Panc1 (cell line): ENCODE measurements at regions of chr1 and their contacts with region 1.

Region 1: DNA sequence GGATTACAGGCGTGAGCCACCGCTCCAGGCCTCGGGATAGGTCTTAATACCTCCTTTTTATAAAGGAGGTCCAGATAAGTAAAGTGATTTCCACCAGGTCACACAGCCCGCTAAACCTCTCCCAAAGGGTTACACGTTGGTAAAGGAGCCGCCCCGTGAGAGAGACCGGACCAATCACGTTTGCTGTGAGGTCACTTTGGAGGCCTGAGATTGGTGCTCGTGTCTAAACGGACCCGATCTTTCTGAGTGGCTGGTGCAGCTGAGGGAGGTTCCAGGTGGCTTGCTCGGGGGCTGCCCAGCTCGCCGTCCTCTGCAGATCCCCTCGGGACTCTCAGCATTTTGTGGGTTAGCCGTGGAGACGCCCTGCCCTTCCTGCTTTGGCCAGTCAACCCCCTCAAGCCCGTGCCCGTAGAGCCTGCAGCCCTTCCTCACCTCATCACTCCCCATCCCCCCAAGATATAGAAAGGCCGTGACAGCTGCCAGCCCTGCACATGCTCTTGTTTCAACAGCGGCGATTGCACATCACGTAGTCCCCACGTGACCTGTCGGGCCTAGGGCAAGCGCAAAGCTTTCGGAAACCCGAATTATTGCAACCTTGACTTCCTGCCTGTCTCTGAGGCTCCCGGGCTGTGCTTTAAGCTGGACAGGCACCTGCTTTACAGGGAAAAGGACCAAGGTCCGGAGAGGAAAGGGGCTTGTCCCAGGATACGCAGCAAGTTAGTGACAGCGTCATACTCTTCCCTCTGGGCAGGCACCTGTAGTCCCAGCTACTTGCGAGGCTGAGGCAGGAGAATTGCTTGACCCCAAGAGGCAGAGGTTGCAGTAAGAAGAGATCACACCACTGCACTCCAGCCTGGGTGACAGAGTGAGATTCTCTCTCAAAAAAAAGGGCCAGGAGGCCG is 5.0 kb upstream of the COA7 start:
- DNase-seq: peak; percentile 89
- ATAC-seq: peak; percentile 95
- H3K4me3 ChIP-seq: peak overlapping the region; percentile 53 to 82
- H3K27ac ChIP-seq: peak overlapping the region; percentile 82
- H3K4me1 ChIP-seq: peaks cover 25% of the 10 kb centered on the region
- H3K27me3 ChIP-seq: no peaks in the 10 kb centered on the region
- CTCF ChIP-seq: no peak

Region 2: GRCh38 chr1:52552505-52553361 is 150.4 kb before region 1 on chr1 and contains the start of gene TUT4:
- CTCF ChIA-PET with region 1: interaction called, 10 read pairs
- POLR2A ChIA-PET with region 1: no interaction called
- in situ Hi-C with region 1: no loop called
- intact Hi-C with region 1: no loop called
- DNase-seq: no peak
- ATAC-seq: peak; percentile 81
- H3K4me3 ChIP-seq: peak within 1 kb of the TSS; percentile 81 to 96
- H3K27ac ChIP-seq: peak within 1 kb of the TSS; percentile 93
- H3K4me1 ChIP-seq: peaks cover 26% of the 10 kb centered on the region
- H3K27me3 ChIP-seq: no peaks in the 10 kb centered on the region
- CTCF ChIP-seq: no peak
- total RNA-seq, gene TUT4: 67.4 TPM

Region 3: DNA sequence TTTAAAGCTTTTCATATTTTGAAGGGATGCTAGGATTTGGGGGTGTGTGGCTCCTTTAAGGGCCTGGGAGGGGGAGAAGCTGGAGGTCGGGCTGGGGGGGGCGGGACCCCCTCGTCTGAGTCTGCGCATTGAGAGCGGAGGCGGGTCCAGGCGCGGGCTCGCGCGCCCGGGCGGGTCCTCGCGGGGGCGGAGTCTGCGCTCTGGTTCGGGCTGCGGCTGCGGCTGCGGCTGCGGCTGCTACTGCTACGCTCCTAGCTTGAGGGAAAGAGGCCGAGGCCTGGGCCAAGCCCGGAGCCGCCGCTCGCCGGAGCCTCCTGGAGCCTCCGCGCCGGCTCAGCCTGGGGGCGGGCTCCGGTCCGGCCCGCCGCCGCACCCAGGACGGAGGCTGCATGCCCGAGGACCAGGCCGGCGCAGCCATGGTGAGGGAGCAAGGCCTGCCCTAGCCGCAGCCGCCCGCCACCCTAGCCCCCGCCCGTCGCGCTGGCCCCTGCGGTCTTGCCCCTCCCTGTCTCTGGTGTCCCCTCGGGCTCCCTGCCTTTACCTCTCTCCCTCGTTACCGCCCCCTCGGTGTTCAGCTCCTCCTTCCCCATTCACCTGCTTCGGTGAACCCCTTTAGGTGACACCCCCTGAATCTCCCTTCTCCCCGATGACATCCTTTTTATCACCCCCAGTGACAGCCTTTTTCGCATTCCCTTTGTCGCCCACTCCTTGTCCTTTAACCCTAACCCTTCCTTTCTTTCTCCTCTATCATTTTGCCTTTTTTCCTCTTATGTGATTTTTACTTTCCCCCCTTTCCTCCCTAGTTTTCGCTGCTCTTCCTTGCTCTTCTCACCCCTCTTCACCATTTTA is 23.4 kb after region 1 on chr1 and contains the start of gene ZYG11B:
- CTCF ChIA-PET with region 1: interaction called, 13 read pairs
- POLR2A ChIA-PET with region 1: interaction called, 3 read pairs
- in situ Hi-C with region 1: no loop called
- intact Hi-C with region 1: no loop called
- DNase-seq: peak; percentile 38
- ATAC-seq: peak; percentile 98
- H3K4me3 ChIP-seq: peak within 1 kb of the TSS; percentile 92 to 98
- H3K27ac ChIP-seq: peak within 1 kb of the TSS; percentile 96
- H3K4me1 ChIP-seq: peaks cover 9% of the 10 kb centered on the region
- H3K27me3 ChIP-seq: no peaks in the 10 kb centered on the region
- CTCF ChIP-seq: no peak
- total RNA-seq, gene ZYG11B: 30.7 TPM

Region 4: GRCh38 chr1:52748119-52748518 is 45.0 kb after region 1 on chr1:
- CTCF ChIA-PET with region 1: no interaction called
- POLR2A ChIA-PET with region 1: no interaction called
- in situ Hi-C with region 1: no loop called
- intact Hi-C with region 1: loop called (anchors 2 kb)
- DNase-seq: no peak
- ATAC-seq: no peak
- H3K4me3 ChIP-seq: no peak overlapping the region
- H3K27ac ChIP-seq: no peak overlapping the region
- H3K4me1 ChIP-seq: peaks cover 4% of the 10 kb centered on the region; the same call in 1 of the 2 replicates
- H3K27me3 ChIP-seq: no peaks in the 10 kb centered on the region
- CTCF ChIP-seq: no peak

Region 5: DNA sequence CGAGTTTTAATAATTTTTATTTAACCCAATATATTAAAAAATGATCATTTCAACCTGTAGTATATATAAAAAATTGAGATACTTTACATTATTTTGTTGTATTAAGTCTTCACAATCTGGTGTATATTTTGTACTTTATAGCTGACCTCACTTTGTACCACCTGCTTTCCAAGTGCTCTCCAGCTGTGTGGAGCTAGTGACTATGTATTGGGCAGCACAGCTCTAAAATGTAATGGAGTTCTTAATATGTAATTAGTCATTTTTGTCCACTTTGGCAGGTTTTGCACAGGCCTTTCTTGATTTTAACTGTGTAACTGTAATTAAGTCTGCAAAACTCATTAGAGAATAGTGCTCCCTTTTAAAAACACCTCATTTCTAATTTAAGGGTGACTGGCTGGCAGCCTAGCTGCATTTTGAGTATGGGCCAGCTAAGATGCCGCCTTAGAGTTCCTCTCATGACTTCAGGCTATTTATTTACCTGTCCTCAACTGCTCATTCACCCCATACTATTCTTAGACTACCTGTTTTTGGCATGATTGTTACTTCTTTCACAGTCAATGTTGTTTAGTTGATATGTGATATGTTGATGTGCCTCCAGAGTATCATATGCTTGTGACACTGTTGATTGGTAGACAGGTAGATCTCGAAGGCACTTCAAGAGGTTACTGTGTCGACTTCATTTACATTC is 66.4 kb after region 1 on chr1:
- CTCF ChIA-PET with region 1: no interaction called
- POLR2A ChIA-PET with region 1: interaction called, 11 read pairs
- in situ Hi-C with region 1: no loop called
- intact Hi-C with region 1: no loop called
- DNase-seq: no peak
- ATAC-seq: no peak
- H3K4me3 ChIP-seq: no peak overlapping the region
- H3K27ac ChIP-seq: no peak overlapping the region
- H3K4me1 ChIP-seq: no peaks in the 10 kb centered on the region
- H3K27me3 ChIP-seq: no peaks in the 10 kb centered on the region
- CTCF ChIP-seq: no peak

Region 6: GRCh38 chr1:52825868-52826267 is 122.7 kb after region 1 on chr1:
- CTCF ChIA-PET with region 1: no interaction called
- POLR2A ChIA-PET with region 1: no interaction called
- in situ Hi-C with region 1: no loop called
- intact Hi-C with region 1: loop called (anchors 10 kb)
- DNase-seq: no peak
- ATAC-seq: peak; percentile 71; the same call in 1 of the 2 replicates
- H3K4me3 ChIP-seq: no peak overlapping the region
- H3K27ac ChIP-seq: no peak overlapping the region
- H3K4me1 ChIP-seq: no peaks in the 10 kb centered on the region
- H3K27me3 ChIP-seq: no peaks in the 10 kb centered on the region
- CTCF ChIP-seq: peak; percentile 43; the same call in 1 of the 2 replicates